ENCODE measurements at regions of chr9 and their contacts with region 1.

Region 1: GRCh38 chr9:33320568-33321261 is 30.4 kb downstream of the NFX1 start:
- DNase-seq: peak; percentile 37 to 90
- H3K4me3 ChIP-seq: peak overlapping the region; percentile 10; the same call in 1 of the 2 replicates
- H3K27ac ChIP-seq: peak overlapping the region; percentile 99
- H3K4me1 ChIP-seq: peaks cover 39% of the 10 kb centered on the region
- H3K27me3 ChIP-seq: no peaks in the 10 kb centered on the region
- CTCF ChIP-seq: no peak

Region 2: DNA sequence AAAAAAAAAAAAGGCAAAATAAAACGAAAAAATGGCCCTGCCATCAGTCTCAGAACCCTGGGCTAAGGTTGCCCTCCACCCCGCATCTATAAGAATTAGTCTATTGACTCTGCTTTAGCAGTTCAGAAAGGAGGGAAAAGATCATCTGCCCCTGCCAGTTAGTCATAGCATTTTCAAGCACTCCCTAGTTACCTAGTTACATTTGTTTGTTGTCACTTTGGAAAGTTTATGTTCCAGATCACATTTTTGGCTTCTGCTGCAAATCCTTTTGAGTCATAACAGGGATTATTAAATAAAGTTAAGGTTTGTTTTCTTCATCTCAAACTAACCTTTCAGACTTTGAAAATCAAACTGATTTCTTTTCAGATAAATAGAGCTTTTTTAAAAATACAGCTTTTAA is 29.6 kb after region 1 on chr9:
- CTCF ChIA-PET with region 1: no interaction called
- POLR2A ChIA-PET with region 1: interaction called, 3 read pairs
- intact Hi-C with region 1: loop called (anchors 2 kb)
- DNase-seq: peak; percentile 19 to 86
- H3K4me3 ChIP-seq: no peak overlapping the region
- H3K27ac ChIP-seq: peak overlapping the region; percentile 54
- H3K4me1 ChIP-seq: peaks cover 22% of the 10 kb centered on the region
- H3K27me3 ChIP-seq: no peaks in the 10 kb centered on the region
- CTCF ChIP-seq: no peak

Region 3: DNA sequence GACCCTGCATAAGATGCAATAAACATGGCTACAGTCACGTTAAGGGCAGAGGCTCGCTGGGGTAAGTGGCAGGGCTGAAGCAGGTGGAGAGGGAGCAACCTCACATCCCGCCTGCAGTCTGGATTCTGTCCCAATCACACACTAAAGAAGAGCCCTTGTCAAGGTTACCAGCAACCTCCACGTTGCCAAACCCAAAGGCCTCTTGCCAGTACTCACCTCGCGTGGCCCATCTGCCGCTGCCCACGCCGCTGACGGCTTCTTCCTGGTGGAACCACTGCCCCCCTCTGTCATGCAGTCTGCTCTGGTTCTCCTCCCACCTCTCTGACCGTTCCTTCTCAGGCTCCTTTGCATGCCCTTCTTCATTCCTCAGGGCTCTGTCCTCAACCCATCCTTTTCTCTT is 72.9 kb after region 1 on chr9:
- CTCF ChIA-PET with region 1: no interaction called
- POLR2A ChIA-PET with region 1: no interaction called
- intact Hi-C with region 1: loop called (anchors 10 kb)
- DNase-seq: no peak
- H3K4me3 ChIP-seq: no peak overlapping the region
- H3K27ac ChIP-seq: no peak overlapping the region
- H3K4me1 ChIP-seq: peaks cover 12% of the 10 kb centered on the region
- H3K27me3 ChIP-seq: no peaks in the 10 kb centered on the region
- CTCF ChIP-seq: no peak

Region 4: GRCh38 chr9:33731142-33731541 is 410.4 kb after region 1 on chr9:
- CTCF ChIA-PET with region 1: no interaction called
- POLR2A ChIA-PET with region 1: interaction called, 12 read pairs
- intact Hi-C with region 1: no loop called
- DNase-seq: no peak
- H3K4me3 ChIP-seq: no peak overlapping the region
- H3K27ac ChIP-seq: no peak overlapping the region
- H3K4me1 ChIP-seq: peaks cover 23% of the 10 kb centered on the region
- H3K27me3 ChIP-seq: no peaks in the 10 kb centered on the region
- CTCF ChIP-seq: no peak

Measured in PC-9 (cell line).